Activated naive CD8-positive, alpha-beta T cell treated with anti-CD3 and anti-CD28 coated beads, Interleukin-2, amount 10 ng/mL, durations not matched to agents 7 days and 5 days (primary cell): ENCODE measurements at regions of chr19 and their contacts with region 1.

Region 1: GRCh38 chr19:14383661-14384555 is 2.7 kb downstream of the ADGRE5 start:
- DNase-seq: peak; percentile 60
- ATAC-seq: peak; percentile 8
- H3K4me3 Mint-ChIP-seq: peak overlapping the region; percentile 98
- H3K27ac Mint-ChIP-seq: peak overlapping the region; percentile 95
- H3K4me1 Mint-ChIP-seq: peaks cover 30% of the 10 kb centered on the region
- H3K27me3 Mint-ChIP-seq: no peaks in the 10 kb centered on the region

Region 2: GRCh38 chr19:14136509-14137281 is 247.2 kb before region 1 on chr19 and contains the start of gene ASF1B:
- POLR2A ChIA-PET with region 1: interaction called, 17 read pairs
- DNase-seq: peak; percentile 97
- ATAC-seq: peak; percentile 88
- H3K4me3 Mint-ChIP-seq: peak within 1 kb of the TSS; percentile 85
- H3K27ac Mint-ChIP-seq: peak within 1 kb of the TSS; percentile 91
- H3K4me1 Mint-ChIP-seq: peaks cover 25% of the 10 kb centered on the region
- H3K27me3 Mint-ChIP-seq: no peaks in the 10 kb centered on the region
- total RNA-seq, gene ASF1B: 75.3 to 82.4 TPM

Region 3: GRCh38 chr19:14318873-14319272 is 65.0 kb before region 1 on chr19:
- POLR2A ChIA-PET with region 1: no interaction called
- DNase-seq: no peak
- ATAC-seq: no peak
- H3K4me3 Mint-ChIP-seq: no peak overlapping the region
- H3K27ac Mint-ChIP-seq: no peak overlapping the region
- H3K4me1 Mint-ChIP-seq: no peaks in the 10 kb centered on the region
- H3K27me3 Mint-ChIP-seq: peaks cover 1% of the 10 kb centered on the region

Region 4: GRCh38 chr19:14395710-14396336 is 11.9 kb after region 1 on chr19:
- POLR2A ChIA-PET with region 1: interaction called, 28 read pairs
- DNase-seq: no peak
- ATAC-seq: no peak
- H3K4me3 Mint-ChIP-seq: no peak overlapping the region
- H3K27ac Mint-ChIP-seq: peak overlapping the region; percentile 21
- H3K4me1 Mint-ChIP-seq: peaks cover 7% of the 10 kb centered on the region
- H3K27me3 Mint-ChIP-seq: no peaks in the 10 kb centered on the region

Region 5: GRCh38 chr19:14413693-14414181 is 29.8 kb after region 1 on chr19:
- POLR2A ChIA-PET with region 1: interaction called, 52 read pairs
- DNase-seq: no peak
- ATAC-seq: no peak
- H3K4me3 Mint-ChIP-seq: peak overlapping the region; percentile 7
- H3K27ac Mint-ChIP-seq: peak overlapping the region; percentile 61
- H3K4me1 Mint-ChIP-seq: peaks cover 41% of the 10 kb centered on the region
- H3K27me3 Mint-ChIP-seq: no peaks in the 10 kb centered on the region

Region 6: GRCh38 chr19:14425696-14426138 is 41.8 kb after region 1 on chr19:
- POLR2A ChIA-PET with region 1: no interaction called
- DNase-seq: no peak
- ATAC-seq: no peak
- H3K4me3 Mint-ChIP-seq: no peak overlapping the region
- H3K27ac Mint-ChIP-seq: no peak overlapping the region
- H3K4me1 Mint-ChIP-seq: peaks cover 3% of the 10 kb centered on the region
- H3K27me3 Mint-ChIP-seq: peaks cover 5% of the 10 kb centered on the region

Region 7: DNA sequence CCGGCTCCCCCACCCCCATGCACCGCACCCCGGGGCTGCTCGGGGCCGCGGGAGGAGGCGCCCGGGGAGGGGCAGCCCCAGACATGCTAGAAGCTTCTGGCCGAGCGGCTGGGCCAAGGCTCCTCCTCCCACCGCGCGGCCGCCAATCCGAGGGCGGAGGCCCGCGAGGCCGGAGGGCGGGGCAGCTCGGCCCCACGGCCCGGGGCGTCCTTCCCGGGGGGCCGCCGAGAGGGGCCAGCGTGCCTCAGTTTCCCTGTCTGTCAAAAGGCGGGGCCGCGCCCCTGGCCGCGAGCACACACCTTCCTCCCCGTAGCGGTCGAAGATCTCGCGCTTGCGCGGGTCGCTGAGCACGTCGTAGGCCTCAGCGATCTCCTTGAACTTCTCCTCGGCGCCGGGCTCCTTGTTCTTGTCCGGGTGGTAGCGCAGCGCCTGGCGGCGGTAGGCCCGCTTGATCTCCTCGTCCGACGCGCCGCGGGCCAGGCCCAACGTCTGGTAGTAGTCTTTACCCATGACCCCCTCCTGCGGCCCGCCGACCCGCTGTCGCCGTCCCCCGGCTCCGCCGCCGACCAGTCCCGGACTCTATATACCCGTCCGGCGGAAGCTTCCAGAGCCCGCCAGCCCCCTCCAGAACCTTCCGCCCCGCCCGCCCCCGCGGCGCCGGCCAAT is 134.1 kb after region 1 on chr19 and contains the start of gene DNAJB1:
- POLR2A ChIA-PET with region 1: interaction called, 23 read pairs
- DNase-seq: peak; percentile 85
- ATAC-seq: peak; percentile 62
- H3K4me3 Mint-ChIP-seq: peak within 1 kb of the TSS; percentile 92
- H3K27ac Mint-ChIP-seq: peak within 1 kb of the TSS; percentile 97
- H3K4me1 Mint-ChIP-seq: peaks cover 60% of the 10 kb centered on the region
- H3K27me3 Mint-ChIP-seq: no peaks in the 10 kb centered on the region
- total RNA-seq, gene DNAJB1: 103 to 110 TPM